ENCODE measurements at regions of chr6 and their contacts with region 1.

Region 1: DNA sequence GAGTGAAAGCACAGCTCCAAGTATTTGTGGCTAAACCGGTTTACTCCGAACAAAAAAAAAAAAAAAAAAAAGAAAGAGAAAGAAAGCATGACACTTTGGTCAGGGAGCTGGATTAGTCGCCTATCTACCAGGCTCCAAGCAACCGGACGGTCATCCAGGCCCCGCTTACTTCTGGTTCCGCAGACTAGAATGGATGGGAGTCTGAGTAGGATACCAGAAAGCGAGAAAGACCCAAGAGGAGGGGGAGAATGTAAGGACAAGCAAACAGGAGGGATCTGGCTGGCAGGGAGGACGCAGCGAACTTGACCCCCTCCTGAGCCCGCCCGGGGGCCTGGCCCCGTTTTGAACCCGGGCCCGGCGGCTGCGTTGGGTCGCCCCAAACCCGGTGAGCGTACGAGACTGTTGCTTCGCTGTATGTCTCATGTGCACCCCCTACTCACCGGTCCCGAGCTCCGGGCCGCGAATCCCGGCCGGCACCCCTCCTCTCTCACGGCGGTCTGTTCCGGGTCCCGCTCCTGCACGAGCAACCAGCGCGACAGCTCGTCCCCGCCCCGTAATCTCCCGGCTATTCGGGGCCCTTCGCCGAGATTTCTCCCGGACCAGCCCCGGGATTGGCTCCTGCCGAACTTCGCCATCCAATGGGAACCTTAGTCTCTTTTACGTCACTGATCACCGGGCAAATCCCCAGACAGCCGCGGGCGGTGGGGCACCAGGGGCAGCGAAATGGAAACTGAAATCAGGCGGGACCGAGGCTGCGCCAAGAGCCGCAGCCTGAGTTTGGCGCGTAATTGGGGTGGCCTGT is at the start of gene TRIM26:
- DNase-seq: peak; percentile 97 to 99
- H3K4me3 ChIP-seq: peak within 1 kb of the TSS; percentile 71
- H3K27ac ChIP-seq: peak within 1 kb of the TSS; percentile 89 to 90
- H3K4me1 ChIP-seq: peaks cover 6 to 37% (median 21%) of the 10 kb centered on the region in 4 donors
- H3K27me3 ChIP-seq: no peaks in the 10 kb centered on the region
- CTCF ChIP-seq: no peak

Region 2: DNA sequence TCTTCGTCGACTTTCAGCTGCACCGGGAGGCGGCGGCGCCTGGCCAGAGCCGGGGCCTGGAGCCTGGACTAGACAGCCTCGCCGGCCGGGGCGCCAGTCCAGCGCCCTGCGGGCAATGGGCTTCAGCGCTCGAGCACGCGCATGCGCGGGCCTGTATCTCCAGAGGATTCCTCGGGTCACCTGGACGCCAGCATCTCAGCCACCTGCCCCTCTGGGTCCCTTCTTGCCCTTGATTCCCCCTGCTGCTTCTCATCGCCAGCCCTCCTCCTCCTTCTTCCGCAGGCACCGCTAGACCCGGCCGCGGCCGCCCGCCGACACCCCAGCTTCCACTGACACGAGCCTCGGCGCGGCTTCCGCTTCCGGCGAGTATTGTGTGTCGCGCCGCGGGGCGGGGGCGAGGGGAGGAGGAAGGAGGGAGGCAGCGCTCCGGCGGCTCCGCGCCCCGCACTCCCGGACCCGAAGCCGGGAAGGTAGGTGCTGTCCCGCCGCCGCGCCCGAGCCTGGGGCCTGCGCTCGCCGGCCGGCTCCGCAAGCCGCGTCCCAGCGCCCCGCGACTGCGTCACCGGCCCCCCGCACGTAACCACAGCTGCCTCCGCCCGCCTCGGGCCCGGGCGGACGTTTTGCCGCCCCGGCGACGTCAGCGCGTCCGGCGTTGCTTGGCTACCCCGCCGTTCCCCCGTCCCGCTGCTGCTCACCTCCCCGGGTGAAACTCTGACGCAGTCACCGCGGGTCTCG is 113.6 kb after region 1 on chr6 and contains the start of gene TRIM39:
- intact Hi-C with region 1: loop called (anchors 10 kb)
- DNase-seq: peak; percentile 89 to 92
- H3K4me3 ChIP-seq: peak within 1 kb of the TSS; percentile 59 to 62
- H3K27ac ChIP-seq: peak within 1 kb of the TSS; percentile 85 to 89
- H3K4me1 ChIP-seq: peaks cover 0 to 29% (median 14%) of the 10 kb centered on the region in 4 donors
- H3K27me3 ChIP-seq: no peaks in the 10 kb centered on the region
- CTCF ChIP-seq: peak in 1 of 2 experiments; percentile 17

Region 3: DNA sequence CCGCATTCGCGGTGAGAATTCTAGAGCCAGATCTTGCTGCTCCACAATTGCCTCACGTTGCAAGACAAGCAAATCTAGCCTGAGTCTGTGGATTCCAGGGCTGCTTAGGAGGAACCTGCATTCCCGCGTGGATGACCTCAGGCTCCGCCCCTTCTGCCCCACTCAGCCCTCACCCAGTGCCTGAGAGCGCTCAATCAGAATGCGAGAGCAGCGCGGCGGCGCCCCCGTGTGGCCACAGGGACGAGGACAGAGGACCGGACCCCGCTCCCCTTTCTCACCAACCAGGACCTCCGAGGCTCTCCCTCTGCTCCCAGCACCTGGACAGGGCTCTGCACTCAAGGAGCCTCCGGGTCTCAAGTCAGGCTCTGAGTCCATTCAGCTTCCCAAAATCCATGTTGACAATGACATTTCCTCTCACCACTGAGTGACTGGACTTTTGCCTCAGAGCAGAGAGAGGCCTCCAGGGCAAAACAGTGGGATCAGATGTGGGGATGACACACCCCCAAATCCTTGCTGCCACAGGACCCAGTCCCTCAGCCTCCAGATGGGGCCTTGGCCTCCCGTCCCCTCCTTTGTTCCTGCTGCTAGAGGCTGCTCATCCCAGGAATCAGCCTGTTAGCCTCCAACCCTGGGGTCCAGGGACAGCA is 183.9 kb after region 1 on chr6:
- intact Hi-C with region 1: loop called (anchors 10 kb)
- DNase-seq: peak; percentile 69 to 79
- H3K4me3 ChIP-seq: no peak overlapping the region
- H3K27ac ChIP-seq: no peak overlapping the region
- H3K4me1 ChIP-seq: peaks cover 0 to 5% (median 4%) of the 10 kb centered on the region in 4 donors
- H3K27me3 ChIP-seq: peaks cover 0 to 41% of the 10 kb centered on the region in 2 donors
- CTCF ChIP-seq: peak; percentile 60 to 69

Measured in tibial artery (tissue), 4 donors.